Activated B cell treated with CpG ODN at 0.5 μM for 24 hours (primary cell): ENCODE measurements at regions of chr18 and their contacts with region 1.

Region 1: DNA sequence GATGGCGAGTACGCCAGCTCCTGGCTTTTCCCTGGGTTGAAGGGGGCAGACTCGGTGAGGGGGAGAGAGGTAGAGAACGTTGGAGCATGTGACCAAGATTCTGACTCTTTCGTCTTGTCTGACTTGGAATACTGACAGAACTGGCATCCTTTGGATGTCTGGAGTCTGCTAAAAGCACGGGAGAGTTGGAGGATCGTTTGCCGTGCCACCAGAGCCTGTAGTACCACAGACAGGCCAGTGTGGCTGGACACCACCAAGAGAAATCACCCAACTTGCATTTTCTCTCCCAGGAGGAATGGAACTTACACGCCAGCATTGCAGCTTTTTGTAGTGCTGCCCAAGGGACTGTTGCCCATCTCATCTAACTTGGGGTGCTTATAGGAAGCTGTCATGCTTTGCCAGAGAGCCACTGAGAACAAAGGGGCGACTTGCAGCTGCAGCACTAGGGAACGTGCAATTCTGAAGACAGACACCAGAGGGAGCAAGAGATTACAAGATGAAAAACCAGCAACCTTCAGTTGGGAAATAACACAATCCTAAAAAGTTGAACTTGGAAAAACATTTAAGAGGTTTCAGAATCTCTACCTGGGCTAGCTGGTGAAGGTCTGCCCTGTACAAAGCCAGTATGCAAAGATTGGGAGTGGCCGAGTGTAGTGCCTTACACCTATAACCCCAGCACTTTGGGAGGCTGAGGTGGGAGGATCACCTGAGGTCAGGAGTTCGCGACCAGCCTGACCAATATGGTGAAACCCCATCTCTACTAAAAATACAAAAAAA is 24.1 kb downstream of the PSMG2 start:
- DNase-seq: no peak
- ATAC-seq: peak; percentile 60
- H3K4me3 Mint-ChIP-seq: no peak overlapping the region
- H3K27ac Mint-ChIP-seq: no peak overlapping the region
- H3K4me1 Mint-ChIP-seq: no peaks in the 10 kb centered on the region
- H3K27me3 Mint-ChIP-seq: no peaks in the 10 kb centered on the region
- CTCF ChIP-seq: peak; percentile 88

Region 2: DNA sequence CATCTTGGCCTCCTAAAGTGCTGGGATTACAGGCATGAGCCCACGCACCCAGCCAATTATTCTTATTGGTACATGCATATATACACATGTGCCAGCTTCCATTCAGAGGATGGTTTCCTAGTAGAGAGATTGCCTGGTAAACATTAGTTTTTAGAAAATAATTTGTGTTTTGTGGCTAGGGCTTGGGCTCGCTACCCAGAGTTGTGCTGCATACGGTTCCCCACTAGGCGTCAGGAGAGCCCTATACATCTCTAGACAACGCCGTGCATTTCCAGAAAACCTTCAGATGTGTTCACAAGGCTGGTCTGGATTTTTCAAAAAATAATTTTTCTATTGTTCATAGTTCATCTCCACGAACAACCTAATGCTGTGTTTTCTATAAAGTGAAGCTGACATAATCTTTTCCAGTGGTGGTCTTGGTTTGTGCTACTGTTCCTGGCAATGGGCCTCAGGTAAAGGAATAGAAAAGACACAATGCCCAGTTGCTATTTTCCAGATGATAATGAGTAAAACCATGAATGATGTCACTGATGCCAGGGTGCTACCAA is 335.3 kb before region 1 on chr18:
- CTCF ChIA-PET with region 1: interaction called, 3 read pairs
- POLR2A ChIA-PET with region 1: no interaction called
- intact Hi-C with region 1: loop called (anchors 1 kb)
- DNase-seq: no peak
- ATAC-seq: peak; percentile 98
- H3K4me3 Mint-ChIP-seq: no peak overlapping the region
- H3K27ac Mint-ChIP-seq: no peak overlapping the region
- H3K4me1 Mint-ChIP-seq: no peaks in the 10 kb centered on the region
- H3K27me3 Mint-ChIP-seq: peaks cover 13% of the 10 kb centered on the region
- CTCF ChIP-seq: no peak

Region 3: GRCh38 chr18:12744103-12744502 is 17.1 kb after region 1 on chr18:
- CTCF ChIA-PET with region 1: interaction called, 5 read pairs
- POLR2A ChIA-PET with region 1: no interaction called
- intact Hi-C with region 1: loop called (anchors 1 kb)
- DNase-seq: no peak
- ATAC-seq: peak; percentile 47
- H3K4me3 Mint-ChIP-seq: no peak overlapping the region
- H3K27ac Mint-ChIP-seq: no peak overlapping the region
- H3K4me1 Mint-ChIP-seq: no peaks in the 10 kb centered on the region
- H3K27me3 Mint-ChIP-seq: peaks cover 7% of the 10 kb centered on the region
- CTCF ChIP-seq: no peak

Region 4: GRCh38 chr18:12934454-12935071 is 207.6 kb after region 1 on chr18:
- CTCF ChIA-PET with region 1: interaction called, 112 read pairs
- POLR2A ChIA-PET with region 1: interaction called, 4 read pairs
- intact Hi-C with region 1: loop called (anchors 1 kb)
- DNase-seq: peak; percentile 62
- ATAC-seq: peak; percentile 89
- H3K4me3 Mint-ChIP-seq: no peak overlapping the region
- H3K27ac Mint-ChIP-seq: no peak overlapping the region
- H3K4me1 Mint-ChIP-seq: no peaks in the 10 kb centered on the region
- H3K27me3 Mint-ChIP-seq: peaks cover 3% of the 10 kb centered on the region
- CTCF ChIP-seq: no peak